HAP-1 (cell line): ENCODE measurements at regions of chr1 and their contacts with region 1.

Region 1: DNA sequence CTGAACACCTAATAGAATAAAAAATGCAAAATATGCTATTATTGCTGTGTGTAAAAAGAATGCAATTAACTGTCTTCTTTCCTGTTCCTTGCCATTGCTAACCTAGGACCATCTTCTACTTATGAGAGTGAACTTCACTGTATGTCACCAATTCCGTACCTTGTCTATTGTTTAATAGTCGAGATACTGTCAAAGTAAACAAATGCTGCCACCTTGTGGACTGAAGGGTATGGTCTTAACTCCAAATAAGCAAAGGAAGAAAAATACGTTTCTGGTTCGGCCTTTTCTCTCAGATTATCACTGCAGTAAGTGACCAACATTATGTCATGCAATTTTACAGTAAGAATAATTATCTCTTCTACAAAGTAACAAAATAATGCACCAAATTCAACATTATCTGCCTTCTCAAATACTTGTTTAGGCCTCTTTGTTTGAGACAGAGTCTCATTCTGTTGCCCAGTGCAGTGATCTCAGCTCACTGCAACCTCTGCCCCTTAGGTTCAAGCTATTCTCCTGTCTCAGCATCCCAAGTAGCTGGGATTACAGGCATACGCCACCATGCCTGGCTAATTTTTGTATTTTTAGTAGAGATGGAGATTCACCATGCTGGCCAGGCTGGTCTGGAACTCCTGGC is 133.4 kb downstream of the COP1 start:
- DNase-seq: peak; percentile 78 to 81
- H3K4me3 ChIP-seq: no peak overlapping the region
- H3K4me1 ChIP-seq: no peaks in the 10 kb centered on the region
- H3K27me3 ChIP-seq: no peaks in the 10 kb centered on the region

Region 2: GRCh38 chr1:175154629-175155472 is 918.8 kb before region 1 on chr1:
- in situ Hi-C with region 1: loop called (anchors 10 kb)
- DNase-seq: peak; percentile 45 to 81
- H3K4me3 ChIP-seq: no peak overlapping the region
- H3K4me1 ChIP-seq: no peaks in the 10 kb centered on the region
- H3K27me3 ChIP-seq: peaks cover 20% of the 10 kb centered on the region